GM23248 (cell line): ENCODE measurements at regions of chr9 and their contacts with region 1.

Region 1: GRCh38 chr9:19102631-19103345 is at the start of gene HAUS6:
- DNase-seq: peak; percentile 99
- H3K4me3 ChIP-seq: peak within 1 kb of the TSS; percentile 97
- H3K27ac ChIP-seq: peak within 1 kb of the TSS; percentile 73
- H3K4me1 ChIP-seq: peaks cover 11% of the 10 kb centered on the region
- H3K27me3 ChIP-seq: no peaks in the 10 kb centered on the region
- total RNA-seq, gene HAUS6: 9.4 and 12.5 TPM in 2 replicates

Region 2: GRCh38 chr9:19009391-19009965 is 93.3 kb before region 1 on chr9:
- in situ Hi-C with region 1: no loop called
- DNase-seq: no peak
- H3K4me3 ChIP-seq: no peak overlapping the region
- H3K27ac ChIP-seq: no peak overlapping the region
- H3K4me1 ChIP-seq: no peaks in the 10 kb centered on the region
- H3K27me3 ChIP-seq: no peaks in the 10 kb centered on the region

Region 3: DNA sequence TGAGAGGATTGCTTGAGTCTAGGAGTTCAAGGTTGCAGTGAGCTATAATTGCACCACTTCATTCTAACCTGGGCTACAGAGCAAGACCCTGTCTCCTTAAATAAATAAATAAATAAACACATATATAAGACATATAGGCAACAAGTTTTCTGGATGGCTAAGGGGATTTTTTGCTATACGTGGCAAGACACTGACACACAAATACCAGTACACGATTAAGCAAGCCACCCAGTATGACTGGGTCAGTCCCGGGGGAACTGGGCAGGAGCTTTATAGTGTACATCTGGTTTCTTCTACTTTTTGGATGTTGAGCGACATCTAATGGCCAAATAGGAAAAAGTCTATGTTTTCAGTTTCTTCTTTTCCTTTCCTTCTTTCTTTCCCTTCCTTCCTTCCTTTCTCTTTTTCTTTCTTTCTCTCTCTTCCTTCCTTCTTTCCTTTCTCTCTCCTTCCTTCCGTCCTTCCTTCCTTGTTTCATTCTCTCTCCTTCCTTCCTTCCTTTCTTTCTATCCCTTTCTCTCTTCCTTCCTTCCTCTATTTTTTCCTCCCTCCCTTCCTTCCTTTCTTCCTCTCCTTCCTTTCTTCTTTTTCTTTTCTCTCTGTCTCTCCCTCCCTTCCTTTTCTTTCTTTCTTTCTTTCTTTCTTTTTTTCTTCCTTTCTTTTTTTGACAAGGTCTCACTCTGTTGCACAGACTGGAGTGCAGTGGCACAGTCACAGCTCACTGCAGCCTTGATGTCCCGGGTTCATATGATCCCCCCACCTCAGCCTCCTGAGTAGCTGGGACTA is 71.5 kb after region 1 on chr9:
- in situ Hi-C with region 1: loop called (anchors 10 kb)
- DNase-seq: peak; percentile 99
- H3K4me3 ChIP-seq: peak overlapping the region; percentile 30; the same call in 1 of the 2 replicates
- H3K27ac ChIP-seq: peak overlapping the region; percentile 94
- H3K4me1 ChIP-seq: peaks cover 20% of the 10 kb centered on the region
- H3K27me3 ChIP-seq: no peaks in the 10 kb centered on the region

Region 4: GRCh38 chr9:20054734-20055133 is 951.9 kb after region 1 on chr9:
- in situ Hi-C with region 1: no loop called
- DNase-seq: no peak
- H3K4me3 ChIP-seq: no peak overlapping the region
- H3K27ac ChIP-seq: no peak overlapping the region
- H3K4me1 ChIP-seq: no peaks in the 10 kb centered on the region
- H3K27me3 ChIP-seq: peaks cover 30% of the 10 kb centered on the region